ENCODE measurements at regions of chr1 and their contacts with region 1.

Region 1: DNA sequence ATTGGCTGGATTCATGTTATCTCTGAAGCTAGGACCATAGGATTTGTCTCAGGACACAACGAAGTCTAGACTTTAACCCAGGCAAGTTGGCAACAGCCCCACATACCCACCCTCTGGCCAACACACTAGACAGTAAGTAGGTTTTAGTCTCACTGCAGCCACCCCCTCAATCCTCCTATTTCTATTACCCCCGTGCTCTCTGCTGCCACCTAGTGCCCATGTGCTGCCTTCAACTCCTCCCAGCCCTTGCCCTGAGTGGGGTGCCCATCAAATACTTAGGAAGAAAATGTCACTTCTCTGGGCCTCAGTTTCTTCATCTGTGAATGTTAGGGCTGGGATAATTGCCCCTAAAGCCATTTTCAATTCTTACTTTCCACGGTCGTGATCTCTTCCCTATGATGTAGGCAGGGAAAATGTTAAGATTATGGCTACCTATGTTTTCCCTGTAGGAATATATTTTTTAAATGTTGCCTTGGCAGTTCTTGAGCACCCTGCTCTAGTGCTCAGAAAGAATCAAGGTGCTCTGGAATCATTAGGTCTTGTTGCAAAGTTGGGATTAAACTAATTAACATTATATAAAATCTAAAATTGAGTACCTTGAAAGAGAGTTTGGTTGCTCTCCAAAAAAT is 213.0 kb downstream of the LMX1A start:
- DNase-seq: peak; percentile 56
- H3K4me3 Mint-ChIP-seq: no peak overlapping the region
- H3K27ac Mint-ChIP-seq: no peak overlapping the region
- H3K4me1 Mint-ChIP-seq: no peaks in the 10 kb centered on the region
- H3K27me3 Mint-ChIP-seq: no peaks in the 10 kb centered on the region

Region 2: GRCh38 chr1:165129568-165130164 is 13.9 kb before region 1 on chr1:
- CTCF ChIA-PET with region 1: interaction called, 10 read pairs
- DNase-seq: peak; percentile 60
- H3K4me3 Mint-ChIP-seq: no peak overlapping the region
- H3K27ac Mint-ChIP-seq: no peak overlapping the region
- H3K4me1 Mint-ChIP-seq: no peaks in the 10 kb centered on the region
- H3K27me3 Mint-ChIP-seq: no peaks in the 10 kb centered on the region

Region 3: GRCh38 chr1:165463978-165464377 is 320.4 kb after region 1 on chr1:
- CTCF ChIA-PET with region 1: no interaction called
- DNase-seq: no peak
- H3K4me3 Mint-ChIP-seq: no peak overlapping the region
- H3K27ac Mint-ChIP-seq: no peak overlapping the region
- H3K4me1 Mint-ChIP-seq: no peaks in the 10 kb centered on the region
- H3K27me3 Mint-ChIP-seq: peaks cover 27% of the 10 kb centered on the region

Measured in activated naive CD4-positive, alpha-beta T cell treated with anti-CD3 and anti-CD28 coated beads, Interleukin-2, amount 10 ng/mL, durations not matched to agents 7 days and 5 days (primary cell).